ENCODE measurements at regions of chr5 and their contacts with region 1.

Region 1: DNA sequence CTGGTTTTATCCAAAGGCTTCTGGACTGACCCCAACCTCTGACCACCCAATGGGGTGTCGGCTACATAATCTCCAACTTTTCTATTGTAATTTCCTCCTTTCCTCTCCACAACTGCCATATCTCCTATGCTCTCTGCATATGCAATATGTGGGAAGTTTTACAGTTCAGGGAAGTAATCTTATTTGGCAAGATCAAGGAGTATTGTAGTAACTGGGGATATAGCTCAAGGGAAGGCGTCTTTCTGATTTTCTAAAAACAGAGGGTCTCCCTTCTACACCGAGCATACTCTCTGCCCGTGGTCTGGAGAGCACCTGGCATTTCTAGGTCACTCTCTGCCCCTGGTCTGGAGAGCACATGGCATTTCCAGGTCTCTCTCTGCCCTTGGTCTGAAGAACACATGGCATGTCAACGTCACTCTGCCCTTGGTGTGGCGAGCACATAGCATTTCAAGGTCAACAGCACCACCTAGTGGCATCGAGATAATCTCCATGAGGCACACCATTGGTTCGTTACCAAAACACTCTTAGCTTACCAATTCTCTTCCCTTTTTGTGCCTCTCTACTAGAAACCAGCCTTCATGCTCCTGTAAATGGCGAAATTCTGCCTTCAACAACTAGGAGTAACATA is 616.4 kb upstream of the NUDT12 start:
- DNase-seq: peak; percentile 74

Region 2: DNA sequence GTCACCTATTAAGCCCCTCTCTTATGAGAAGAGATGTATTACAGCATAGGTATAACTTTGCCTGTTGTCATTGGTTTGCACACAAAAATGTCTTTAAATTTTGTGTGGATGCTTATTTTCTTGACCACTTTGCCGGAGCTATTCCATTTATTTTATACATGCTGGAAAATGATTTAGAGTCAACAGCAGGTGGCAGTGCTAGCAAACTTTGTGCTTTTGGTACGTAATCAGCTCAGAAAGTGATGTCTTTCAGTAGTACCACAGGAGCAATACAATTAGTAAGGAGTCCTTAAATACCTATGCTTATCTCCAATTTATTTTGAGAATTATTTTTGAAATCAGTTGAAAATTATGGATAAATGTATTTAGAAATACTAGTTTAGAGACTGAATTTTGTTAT is 596.6 kb before region 1 on chr5:
- CTCF ChIA-PET with region 1: interaction called, 14 read pairs
- POLR2A ChIA-PET with region 1: no interaction called
- DNase-seq: peak; percentile 18

Region 3: DNA sequence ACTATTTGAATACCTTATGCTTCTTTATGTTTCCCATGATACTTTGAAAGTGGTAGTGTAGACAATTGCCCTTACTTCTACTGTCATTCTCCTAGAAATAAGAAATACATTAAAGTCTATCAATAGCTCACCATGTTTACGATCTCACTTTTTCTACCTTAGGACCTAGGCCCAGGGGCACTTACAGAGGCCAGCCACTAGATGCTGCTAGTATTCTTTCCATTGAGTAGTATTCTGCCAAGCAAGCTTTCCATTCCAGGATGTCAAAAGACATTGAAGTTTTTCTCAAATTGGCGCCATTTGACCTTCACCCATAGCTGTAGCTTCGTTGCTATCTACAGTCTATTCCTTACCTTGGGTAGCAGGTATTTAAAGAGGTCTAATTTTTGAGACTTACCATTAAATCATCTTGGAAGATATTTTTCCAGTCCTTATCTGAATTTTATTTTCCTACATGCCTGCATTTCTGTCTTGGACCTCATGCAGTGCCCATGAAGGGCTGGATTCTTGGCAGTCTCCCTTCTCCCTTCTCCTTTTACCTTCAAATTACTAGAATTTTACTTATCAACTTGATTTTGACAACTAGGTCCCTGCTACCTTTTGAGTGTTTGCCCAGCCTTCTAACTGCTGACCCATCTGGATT is 370.4 kb before region 1 on chr5:
- CTCF ChIA-PET with region 1: interaction called, 28 read pairs
- POLR2A ChIA-PET with region 1: no interaction called
- DNase-seq: peak; percentile 62

Region 4: GRCh38 chr5:104189909-104190308 is 11.0 kb after region 1 on chr5:
- CTCF ChIA-PET with region 1: no interaction called
- POLR2A ChIA-PET with region 1: no interaction called
- DNase-seq: no peak

Measured in HEK293T (cell line).